ENCODE measurements at regions of chr17 and their contacts with region 1.

Region 1: GRCh38 chr17:35816723-35817122 is 7.4 kb downstream of the TAF15 start:
- DNase-seq: no peak
- ATAC-seq: no peak
- H3K4me3 ChIP-seq: no peak overlapping the region
- H3K4me3 Mint-ChIP-seq: no peak overlapping the region
- H3K27ac ChIP-seq: no peak overlapping the region
- H3K27ac Mint-ChIP-seq: no peak overlapping the region
- H3K4me1 ChIP-seq: peaks cover 3 to 5% of the 10 kb centered on the region in 2 donors
- H3K4me1 Mint-ChIP-seq: peaks cover 35% of the 10 kb centered on the region
- H3K27me3 ChIP-seq: no peaks in the 10 kb centered on the region
- H3K27me3 Mint-ChIP-seq: no peaks in the 10 kb centered on the region
- CTCF ChIP-seq: no peak

Region 2: DNA sequence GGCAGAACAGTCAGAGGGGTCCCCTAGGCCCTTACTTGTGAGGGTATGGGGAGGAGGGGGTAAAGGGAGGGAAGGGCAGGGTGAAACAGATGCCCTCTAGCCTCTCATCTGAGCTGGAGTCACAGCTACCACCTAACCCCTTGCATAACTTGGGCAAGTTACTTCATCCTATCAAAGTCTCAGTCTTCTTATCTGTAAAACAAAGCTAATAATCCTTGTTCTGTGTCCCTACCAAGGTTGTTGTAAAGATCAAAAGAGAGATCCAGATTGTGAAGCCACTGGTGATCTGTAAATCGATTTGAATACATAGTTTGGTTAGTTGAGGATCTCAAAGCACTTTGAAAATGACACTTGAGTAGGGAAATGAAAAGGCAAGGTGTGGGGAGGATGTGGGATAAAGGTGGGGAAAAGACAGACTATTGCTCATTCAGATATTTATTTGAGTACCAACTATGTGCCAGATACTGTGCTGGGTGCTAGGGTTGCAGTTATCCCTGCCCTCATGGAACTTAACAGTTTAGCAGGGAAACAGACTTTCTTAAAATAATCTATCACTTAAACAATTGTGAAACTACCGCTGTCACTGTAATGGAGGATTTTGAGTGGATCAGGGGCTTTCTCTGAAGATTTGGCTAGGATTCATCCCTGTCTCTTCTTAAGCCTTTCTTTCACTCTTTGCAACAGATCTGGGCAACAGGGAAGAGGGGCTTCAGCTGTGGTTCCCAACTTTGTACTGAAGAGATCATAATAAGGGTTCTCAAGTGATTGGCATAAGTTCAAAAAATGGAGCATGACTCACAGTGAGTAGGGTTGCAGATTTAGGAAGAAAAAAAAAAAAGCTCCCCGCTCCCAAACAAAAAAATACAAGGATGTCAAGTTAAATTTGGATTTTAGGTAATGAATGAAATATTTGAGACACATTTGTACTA is 49.0 kb after region 1 on chr17:
- CTCF ChIA-PET with region 1: no interaction called
- POLR2A ChIA-PET with region 1: interaction called, 10 read pairs
- intact Hi-C with region 1: no loop called
- DNase-seq: no peak
- ATAC-seq: no peak
- H3K4me3 ChIP-seq: no peak overlapping the region
- H3K4me3 Mint-ChIP-seq: no peak overlapping the region
- H3K27ac ChIP-seq: no peak overlapping the region
- H3K27ac Mint-ChIP-seq: no peak overlapping the region
- H3K4me1 ChIP-seq: no peaks in the 10 kb centered on the region
- H3K4me1 Mint-ChIP-seq: no peaks in the 10 kb centered on the region
- H3K27me3 ChIP-seq: no peaks in the 10 kb centered on the region
- H3K27me3 Mint-ChIP-seq: no peaks in the 10 kb centered on the region
- CTCF ChIP-seq: no peak

Measured in B cell (primary cell).